ENCODE measurements at regions of chr9 and their contacts with region 1.

Region 1: DNA sequence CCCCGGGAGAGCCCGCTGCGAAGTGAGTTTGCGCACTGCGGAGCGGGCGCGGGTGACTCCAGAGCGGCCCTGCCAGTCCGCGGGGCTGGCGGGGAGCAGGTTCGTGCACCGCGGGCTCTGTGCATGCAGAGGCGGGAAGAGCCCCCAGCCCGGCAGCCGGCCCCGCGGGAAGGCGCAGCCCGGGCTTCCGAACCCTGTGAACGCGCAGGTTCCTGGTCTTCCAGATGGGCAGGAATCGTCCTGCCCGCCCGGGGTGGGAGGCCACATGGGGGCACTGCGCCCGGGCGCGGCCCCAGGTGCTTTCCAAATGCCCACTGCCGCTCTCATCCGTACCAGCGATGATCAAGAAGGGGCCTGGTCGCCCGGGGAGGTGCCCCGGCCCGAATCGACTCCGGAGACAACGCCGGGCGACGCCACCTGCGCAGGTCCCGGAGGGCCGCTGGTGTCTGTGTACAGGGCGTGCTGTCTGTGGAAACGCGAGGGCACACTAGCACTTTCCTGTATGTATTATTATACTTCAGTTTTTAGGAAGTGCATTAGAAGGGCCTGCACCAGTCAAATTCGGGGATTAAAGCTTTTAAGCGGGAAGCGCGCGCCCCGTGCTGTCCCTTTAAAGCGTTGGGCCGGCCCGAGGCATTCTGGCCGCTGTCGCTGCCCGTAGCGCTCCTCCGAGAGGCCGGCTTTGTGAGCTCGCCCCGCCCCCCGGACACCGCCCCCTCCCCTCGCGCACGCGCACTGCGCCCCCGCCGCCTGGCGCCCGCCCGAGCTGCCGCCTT is at the start of gene WDR5:
- H3K4me3 Mint-ChIP-seq: peak within 1 kb of the TSS; percentile 97
- H3K27ac Mint-ChIP-seq: peak within 1 kb of the TSS; percentile 94
- H3K4me1 Mint-ChIP-seq: peaks cover 45% of the 10 kb centered on the region
- H3K27me3 Mint-ChIP-seq: no peaks in the 10 kb centered on the region

Region 2: GRCh38 chr9:134163353-134164196 is 28.0 kb after region 1 on chr9:
- intact Hi-C with region 1: loop called (anchors 1 kb)
- H3K4me3 Mint-ChIP-seq: no peak overlapping the region
- H3K27ac Mint-ChIP-seq: no peak overlapping the region
- H3K4me1 Mint-ChIP-seq: peaks cover 38% of the 10 kb centered on the region
- H3K27me3 Mint-ChIP-seq: peaks cover 5% of the 10 kb centered on the region

Measured in dendritic cell treated with granulocyte-macrophage colony-stimulating factor and Interleukin-4, amounts not matched to agents 40 ng/mL and 50 ng/mL, for 4 days (primary cell).